ENCODE measurements at regions of chr11 and their contacts with region 1.

Region 1: DNA sequence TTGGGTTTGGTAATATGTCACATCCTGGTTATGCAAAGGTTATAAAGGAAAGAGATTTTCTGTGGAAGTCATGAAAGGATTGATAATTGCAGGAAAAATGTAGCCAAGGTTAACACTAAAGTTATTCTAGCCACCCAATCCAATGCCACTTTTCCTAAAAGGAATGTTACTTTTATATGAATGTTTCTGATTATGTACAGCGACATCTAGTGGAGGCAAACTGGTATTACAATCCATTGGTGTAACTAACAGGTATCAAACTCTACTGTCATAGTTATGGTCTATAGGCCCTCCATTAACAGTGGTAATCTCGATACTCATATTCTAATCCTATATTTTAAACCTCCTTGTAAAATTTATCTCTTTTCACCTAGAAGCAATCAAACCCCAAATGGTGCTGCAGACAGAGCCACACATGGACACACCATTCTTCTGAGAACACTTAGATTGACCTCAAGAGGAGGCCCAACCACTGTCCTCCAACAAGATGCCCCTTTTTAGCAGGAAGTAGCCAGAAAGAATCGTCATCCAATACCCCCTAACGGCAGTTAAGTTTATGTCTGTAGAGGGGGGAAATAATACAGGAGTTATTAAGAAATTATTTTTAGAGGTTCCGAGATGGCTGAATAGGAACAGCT is 74.9 kb upstream of the RAG2 start:
- DNase-seq: peak; percentile 25 to 53 (median 51)
- H3K4me3 ChIP-seq: no peak overlapping the region
- H3K27ac ChIP-seq: no peak overlapping the region
- H3K4me1 ChIP-seq: no peaks in the 10 kb centered on the region
- H3K27me3 ChIP-seq: no peaks in the 10 kb centered on the region

Region 2: GRCh38 chr11:35641171-35641897 is 1031.6 kb before region 1 on chr11:
- CTCF ChIA-PET with region 1: no interaction called
- POLR2A ChIA-PET with region 1: no interaction called
- DNase-seq: no peak
- H3K4me3 ChIP-seq: no peak overlapping the region
- H3K27ac ChIP-seq: no peak overlapping the region
- H3K4me1 ChIP-seq: no peaks in the 10 kb centered on the region
- H3K27me3 ChIP-seq: no peaks in the 10 kb centered on the region

Region 3: GRCh38 chr11:36657610-36658267 is 15.2 kb before region 1 on chr11:
- CTCF ChIA-PET with region 1: interaction called, 10 read pairs
- POLR2A ChIA-PET with region 1: no interaction called
- DNase-seq: peak in 2 of 3 donors; percentile 44 to 62
- H3K4me3 ChIP-seq: no peak overlapping the region
- H3K27ac ChIP-seq: no peak overlapping the region
- H3K4me1 ChIP-seq: peaks cover 0 to 5% (median 2%) of the 10 kb centered on the region in 4 experiments
- H3K27me3 ChIP-seq: no peaks in the 10 kb centered on the region

Region 4: DNA sequence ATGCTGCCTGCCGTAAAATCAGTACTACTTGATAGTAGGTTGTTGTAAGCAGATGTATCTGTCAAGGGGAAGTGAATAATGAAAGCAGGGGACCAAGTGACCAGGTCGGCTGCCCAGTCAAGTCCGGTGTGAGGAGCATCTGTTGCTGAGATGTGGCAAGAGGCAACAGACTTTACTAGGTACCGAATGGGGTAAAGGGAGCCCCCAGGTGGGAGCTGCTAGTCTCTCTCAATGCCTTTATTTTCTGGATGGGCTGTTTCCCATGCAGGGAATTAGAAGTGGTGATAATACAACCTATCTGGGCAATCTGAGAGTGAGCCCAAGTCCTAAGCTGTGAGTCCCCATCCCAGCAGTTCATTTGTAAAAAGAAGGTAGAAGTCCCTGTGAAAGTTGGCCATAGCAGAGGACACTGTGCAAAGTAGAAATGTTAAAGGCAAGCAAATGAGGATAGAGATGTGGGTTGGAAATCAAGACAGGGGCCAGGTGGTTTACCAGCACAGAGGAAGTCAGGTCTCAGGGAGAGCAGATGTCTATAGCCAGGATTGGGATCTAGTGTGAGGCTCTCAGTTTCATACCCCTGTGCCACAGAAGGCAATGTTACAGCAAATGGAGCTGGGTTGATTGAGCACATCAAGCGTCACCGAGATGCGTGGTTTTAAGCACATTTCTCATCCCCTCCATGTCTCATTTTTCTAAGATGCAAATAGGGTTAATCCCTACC is 15.8 kb after region 1 on chr11:
- CTCF ChIA-PET with region 1: interaction called, 11 read pairs
- POLR2A ChIA-PET with region 1: no interaction called
- DNase-seq: no peak
- H3K4me3 ChIP-seq: no peak overlapping the region
- H3K27ac ChIP-seq: no peak overlapping the region
- H3K4me1 ChIP-seq: peaks cover 0 to 4% (median 0%) of the 10 kb centered on the region in 4 experiments
- H3K27me3 ChIP-seq: peaks cover 0 to 10% (median 7%) of the 10 kb centered on the region in 5 experiments

Region 5: GRCh38 chr11:36945384-36945783 is 272.5 kb after region 1 on chr11:
- CTCF ChIA-PET with region 1: no interaction called
- POLR2A ChIA-PET with region 1: no interaction called
- DNase-seq: peak; percentile 1 to 8 (median 5)
- H3K4me3 ChIP-seq: no peak overlapping the region
- H3K27ac ChIP-seq: no peak overlapping the region
- H3K4me1 ChIP-seq: no peaks in the 10 kb centered on the region
- H3K27me3 ChIP-seq: no peaks in the 10 kb centered on the region